AG04450 (cell line): ENCODE measurements at regions of chr5 and their contacts with region 1.

Region 1: GRCh38 chr5:36870399-36871040 is 6.0 kb upstream of the NIPBL start:
- DNase-seq: no peak
- H3K4me3 ChIP-seq: no peak overlapping the region
- H3K27ac ChIP-seq: no peak overlapping the region
- H3K27me3 ChIP-seq: no peaks in the 10 kb centered on the region
- CTCF ChIP-seq: peak; percentile 70

Region 2: DNA sequence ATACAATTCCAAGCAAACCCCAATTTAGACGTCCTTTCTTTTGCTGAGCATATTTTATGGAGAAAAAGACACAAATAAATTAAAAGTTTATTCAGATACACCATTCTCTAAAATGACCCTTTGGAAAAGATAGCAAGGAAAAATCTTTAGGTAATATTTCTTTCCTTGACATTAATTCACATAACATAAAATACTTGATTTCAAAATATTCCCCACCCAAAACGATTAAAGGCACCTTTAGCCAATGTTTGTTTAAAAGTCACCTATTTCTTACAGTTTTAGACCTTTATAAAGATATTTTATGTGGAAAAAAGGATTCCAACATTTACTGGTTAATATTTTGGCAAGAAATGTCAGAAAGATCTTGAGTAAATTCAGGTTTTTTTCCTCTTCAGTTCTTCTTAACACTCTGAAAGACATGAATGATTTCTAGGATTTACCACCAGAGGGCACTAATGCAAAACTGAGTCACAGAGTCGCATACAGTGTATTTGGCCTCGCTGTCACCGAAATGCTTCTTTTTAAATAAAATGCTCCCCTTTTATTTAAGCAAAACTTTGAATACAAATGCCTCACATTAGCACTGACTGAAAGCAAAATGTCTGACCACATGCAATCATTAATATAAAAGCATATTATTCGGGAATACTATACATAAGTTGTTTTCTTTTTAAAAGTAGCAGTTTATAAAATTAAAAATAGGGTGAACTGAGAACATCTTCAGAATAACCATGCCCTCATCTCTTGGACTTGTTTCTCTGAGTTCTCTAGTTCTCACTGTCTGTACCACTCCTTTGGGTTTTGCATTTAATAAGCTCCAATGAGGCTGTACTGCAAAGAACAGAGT is 141.6 kb before region 1 on chr5:
- CTCF ChIA-PET with region 1: interaction called, 25 read pairs
- POLR2A ChIA-PET with region 1: no interaction called
- DNase-seq: peak; percentile 41
- H3K4me3 ChIP-seq: no peak overlapping the region
- H3K27ac ChIP-seq: no peak overlapping the region
- H3K27me3 ChIP-seq: peaks cover 3% of the 10 kb centered on the region
- CTCF ChIP-seq: peak; percentile 71